ENCODE measurements at regions of chr5 and their contacts with region 1.

Region 1: GRCh38 chr5:75566710-75567309 is 44.4 kb upstream of the ANKDD1B start:
- DNase-seq: peak; percentile 87
- H3K4me3 Mint-ChIP-seq: peak overlapping the region; percentile 71
- H3K27ac Mint-ChIP-seq: peak overlapping the region; percentile 85
- H3K4me1 Mint-ChIP-seq: peaks cover 33% of the 10 kb centered on the region
- H3K27me3 Mint-ChIP-seq: no peaks in the 10 kb centered on the region
- CTCF ChIP-seq: no peak

Region 2: GRCh38 chr5:75281716-75282465 is 284.9 kb before region 1 on chr5:
- CTCF ChIA-PET with region 1: no interaction called
- POLR2A ChIA-PET with region 1: no interaction called
- intact Hi-C with region 1: loop called (anchors 5 kb)
- DNase-seq: peak; percentile 10
- H3K4me3 Mint-ChIP-seq: no peak overlapping the region
- H3K27ac Mint-ChIP-seq: no peak overlapping the region
- H3K4me1 Mint-ChIP-seq: peaks cover 23% of the 10 kb centered on the region
- H3K27me3 Mint-ChIP-seq: no peaks in the 10 kb centered on the region
- CTCF ChIP-seq: no peak

Region 3: DNA sequence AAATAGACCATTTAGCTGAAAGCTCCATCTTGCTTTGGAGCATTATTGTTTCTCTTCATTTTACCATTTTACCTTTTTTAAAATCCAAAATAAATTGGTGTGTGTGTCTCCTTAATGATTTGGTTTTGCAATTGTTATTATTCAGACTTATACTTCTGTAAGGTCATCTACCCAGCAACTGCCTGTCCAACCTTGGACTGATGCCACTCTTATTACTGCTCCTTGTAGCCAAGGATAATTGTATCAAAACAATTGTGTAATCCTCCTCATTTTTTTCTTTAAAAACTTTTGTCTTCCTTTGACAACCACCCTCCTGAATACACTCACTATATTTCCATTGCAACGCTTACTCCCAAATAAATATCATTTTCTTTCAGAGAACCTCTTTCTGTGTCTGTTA is 260.1 kb before region 1 on chr5:
- CTCF ChIA-PET with region 1: no interaction called
- POLR2A ChIA-PET with region 1: no interaction called
- intact Hi-C with region 1: no loop called
- DNase-seq: peak; percentile 28
- H3K4me3 Mint-ChIP-seq: no peak overlapping the region
- H3K27ac Mint-ChIP-seq: no peak overlapping the region
- H3K4me1 Mint-ChIP-seq: peaks cover 6% of the 10 kb centered on the region
- H3K27me3 Mint-ChIP-seq: no peaks in the 10 kb centered on the region
- CTCF ChIP-seq: no peak

Measured in MCF 10A (cell line).